ENCODE measurements at regions of chr16 and their contacts with region 1.

Region 1: DNA sequence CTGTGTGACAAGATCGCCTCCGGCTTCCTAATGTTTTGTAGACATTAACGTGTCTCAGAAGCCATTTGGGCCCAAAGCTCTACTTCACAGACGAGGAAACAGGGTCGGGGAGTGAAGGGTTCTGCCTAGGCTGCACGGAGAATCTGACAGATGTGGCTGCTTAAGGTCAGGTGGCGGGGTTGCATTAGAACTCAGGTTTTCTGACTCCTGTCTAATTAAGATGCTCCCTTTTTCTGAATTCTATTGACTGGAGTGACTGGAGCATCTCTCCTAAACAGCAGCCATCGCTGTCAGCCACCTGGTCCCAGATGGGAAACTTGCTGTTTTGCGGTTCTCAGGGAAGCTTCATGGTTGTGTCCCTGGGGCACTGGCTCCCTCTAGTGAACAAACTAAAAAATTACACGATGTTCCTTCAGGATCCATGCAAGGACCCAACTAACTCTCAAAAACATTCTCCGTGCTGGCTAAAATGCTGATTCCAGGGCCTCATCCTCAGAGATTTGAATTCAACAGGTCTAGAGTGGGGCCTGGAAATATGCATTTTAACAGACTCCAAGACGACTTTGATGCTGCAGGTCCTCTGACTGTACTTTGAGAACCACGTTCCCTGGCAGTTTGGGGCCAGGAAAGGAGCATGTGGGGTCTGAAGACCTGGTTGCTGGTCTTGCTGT is 117.4 kb downstream of the IRF8 start:
- DNase-seq: peak; percentile 36 to 49 (median 40)
- ATAC-seq: peak; percentile 68
- H3K4me3 ChIP-seq: no peak overlapping the region
- H3K27ac ChIP-seq: no peak overlapping the region
- H3K4me1 ChIP-seq: no peaks in the 10 kb centered on the region
- H3K27me3 ChIP-seq: no peaks in the 10 kb centered on the region
- CTCF ChIP-seq: peak; percentile 62 to 83 (median 73)
- POLR2A ChIP-seq: no peak

Region 2: DNA sequence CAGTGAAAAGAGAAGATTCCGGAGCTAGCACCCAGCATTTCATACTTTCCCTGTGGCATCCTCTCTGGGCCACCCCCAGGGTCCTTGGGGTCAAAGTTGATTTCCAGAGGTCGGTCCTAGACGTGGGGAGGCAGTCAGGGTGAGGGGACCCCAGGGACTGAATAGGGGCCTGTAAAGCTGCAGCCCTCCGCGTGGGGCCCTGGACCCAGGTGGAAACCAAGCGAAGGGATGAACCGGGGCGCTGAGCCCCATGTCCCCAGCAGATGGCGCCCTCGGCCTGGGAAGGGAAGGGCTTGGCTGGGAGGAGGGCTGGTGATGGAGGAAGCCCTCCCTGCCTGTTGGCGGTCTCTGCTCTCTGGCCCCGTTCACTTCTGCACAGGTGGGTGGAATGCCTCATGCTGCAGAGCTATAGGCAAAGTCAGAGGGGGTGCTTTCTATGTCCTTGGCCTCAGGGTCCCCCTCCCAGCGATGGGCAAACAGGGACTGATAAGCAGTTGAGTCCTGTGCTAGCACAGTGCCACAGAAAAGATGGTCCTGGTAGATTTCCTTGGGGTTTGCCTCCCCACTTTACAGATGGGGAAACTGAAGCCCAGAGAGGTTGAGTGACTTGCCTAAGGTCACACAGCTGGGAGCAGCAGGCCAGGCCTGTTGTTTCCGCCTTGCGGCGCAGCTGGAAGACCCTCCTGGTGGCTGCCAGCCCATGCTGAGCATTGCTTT is 740.6 kb before region 1 on chr16:
- intact Hi-C with region 1: loop called (anchors 10 kb)
- DNase-seq: peak; percentile 47 to 74 (median 70)
- ATAC-seq: peak; percentile 75
- H3K4me3 ChIP-seq: no peak overlapping the region
- H3K27ac ChIP-seq: no peak overlapping the region
- H3K4me1 ChIP-seq: no peaks in the 10 kb centered on the region
- H3K27me3 ChIP-seq: no peaks in the 10 kb centered on the region
- CTCF ChIP-seq: peak; percentile 78 to 88 (median 83)
- POLR2A ChIP-seq: no peak

Region 3: DNA sequence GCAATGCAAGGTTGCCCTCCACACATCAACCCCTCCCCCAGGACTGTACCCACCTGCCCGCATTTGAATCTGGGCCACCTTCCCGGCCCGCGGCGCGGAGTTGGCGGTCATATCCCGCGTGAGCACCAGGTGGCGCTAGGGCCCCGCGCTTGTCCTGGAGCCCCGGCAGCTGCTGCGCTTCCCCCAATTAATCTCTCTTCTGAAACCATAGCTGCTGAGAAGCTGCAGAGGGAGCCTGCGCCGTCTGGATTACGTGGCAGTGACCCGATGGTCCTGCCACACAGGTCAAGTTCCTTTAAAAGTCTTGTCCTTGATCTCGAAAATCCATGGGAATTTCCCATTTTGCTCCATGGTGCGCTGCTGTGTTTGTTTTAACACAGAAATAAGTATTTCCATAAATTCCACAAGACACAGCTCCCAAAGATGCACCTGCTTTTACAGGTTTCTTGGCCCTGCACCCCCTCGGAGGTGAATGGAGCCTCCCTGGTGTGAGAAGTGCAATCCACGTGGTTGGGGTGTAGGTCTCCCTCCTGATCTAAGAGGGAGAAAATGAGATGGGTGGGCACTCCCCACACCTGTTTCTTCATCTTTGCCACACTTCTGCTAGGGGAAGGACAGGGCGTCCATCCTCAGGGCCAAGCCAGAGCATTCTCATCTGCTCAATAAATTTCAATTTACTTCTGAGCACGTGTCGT is 194.7 kb before region 1 on chr16:
- intact Hi-C with region 1: loop called (anchors 5 kb)
- DNase-seq: peak; percentile 80 to 86 (median 84)
- ATAC-seq: peak; percentile 86
- H3K4me3 ChIP-seq: no peak overlapping the region
- H3K27ac ChIP-seq: no peak overlapping the region
- H3K4me1 ChIP-seq: peaks cover 7% of the 10 kb centered on the region
- H3K27me3 ChIP-seq: peaks cover 0 to 6% of the 10 kb centered on the region in 2 donors
- CTCF ChIP-seq: peak; percentile 93 to 98 (median 97)
- POLR2A ChIP-seq: no peak

Region 4: GRCh38 chr16:86072328-86073102 is 56.2 kb after region 1 on chr16:
- intact Hi-C with region 1: no loop called
- DNase-seq: peak; percentile 67 to 76 (median 73)
- ATAC-seq: peak; percentile 58
- H3K4me3 ChIP-seq: no peak overlapping the region
- H3K27ac ChIP-seq: no peak overlapping the region
- H3K4me1 ChIP-seq: no peaks in the 10 kb centered on the region
- H3K27me3 ChIP-seq: no peaks in the 10 kb centered on the region
- CTCF ChIP-seq: peak; percentile 63 to 83 (median 77)
- POLR2A ChIP-seq: no peak

Measured in body of pancreas (tissue), 4 donors.